ENCODE measurements at regions of chr3 and their contacts with region 1.

Region 1: GRCh38 chr3:66378256-66378823 is 122.5 kb downstream of the LRIG1 start:
- DNase-seq: no peak
- ATAC-seq: no peak
- H3K4me3 Mint-ChIP-seq: no peak overlapping the region
- H3K27ac Mint-ChIP-seq: peak overlapping the region; percentile 45
- H3K4me1 Mint-ChIP-seq: peaks cover 9% of the 10 kb centered on the region
- H3K27me3 Mint-ChIP-seq: no peaks in the 10 kb centered on the region

Region 2: GRCh38 chr3:66276705-66277274 is 101.5 kb before region 1 on chr3:
- CTCF ChIA-PET with region 1: interaction called, 25 read pairs
- POLR2A ChIA-PET with region 1: interaction called, 3 read pairs
- DNase-seq: peak; percentile 74
- ATAC-seq: no peak
- H3K4me3 Mint-ChIP-seq: no peak overlapping the region
- H3K27ac Mint-ChIP-seq: no peak overlapping the region
- H3K4me1 Mint-ChIP-seq: peaks cover 16% of the 10 kb centered on the region
- H3K27me3 Mint-ChIP-seq: no peaks in the 10 kb centered on the region

Region 3: GRCh38 chr3:66302288-66302687 is 76.1 kb before region 1 on chr3:
- CTCF ChIA-PET with region 1: interaction called, 11 read pairs
- POLR2A ChIA-PET with region 1: no interaction called
- DNase-seq: peak; percentile 54
- ATAC-seq: peak; percentile 71
- H3K4me3 Mint-ChIP-seq: peak overlapping the region; percentile 6
- H3K27ac Mint-ChIP-seq: peak overlapping the region; percentile 86
- H3K4me1 Mint-ChIP-seq: peaks cover 59% of the 10 kb centered on the region
- H3K27me3 Mint-ChIP-seq: no peaks in the 10 kb centered on the region

Region 4: DNA sequence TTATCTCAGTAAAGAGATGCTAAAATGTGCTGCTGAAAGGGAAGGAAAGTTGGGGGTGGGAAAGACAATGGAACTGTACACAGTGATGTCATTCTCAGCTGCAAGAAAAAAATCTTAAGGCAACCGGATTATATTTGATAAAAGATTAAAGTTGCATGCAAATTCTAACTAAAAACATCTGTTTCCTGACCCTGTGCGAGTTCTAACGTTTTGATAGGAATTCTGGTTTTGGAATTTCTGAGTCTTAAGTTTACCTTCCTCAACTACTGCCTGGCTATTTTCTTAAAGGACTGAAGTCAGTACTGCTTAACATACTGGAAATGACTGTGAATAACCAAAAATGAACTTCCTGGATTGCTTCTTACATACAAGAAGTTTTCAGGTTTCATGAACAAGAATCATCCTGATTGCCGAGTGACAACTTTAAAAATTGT is 42.0 kb before region 1 on chr3:
- CTCF ChIA-PET with region 1: no interaction called
- POLR2A ChIA-PET with region 1: no interaction called
- DNase-seq: no peak
- ATAC-seq: no peak
- H3K4me3 Mint-ChIP-seq: no peak overlapping the region
- H3K27ac Mint-ChIP-seq: no peak overlapping the region
- H3K4me1 Mint-ChIP-seq: no peaks in the 10 kb centered on the region
- H3K27me3 Mint-ChIP-seq: no peaks in the 10 kb centered on the region

Region 5: GRCh38 chr3:66353530-66353929 is 24.8 kb before region 1 on chr3:
- CTCF ChIA-PET with region 1: interaction called, 22 read pairs
- POLR2A ChIA-PET with region 1: no interaction called
- DNase-seq: no peak
- ATAC-seq: no peak
- H3K4me3 Mint-ChIP-seq: no peak overlapping the region
- H3K27ac Mint-ChIP-seq: no peak overlapping the region
- H3K4me1 Mint-ChIP-seq: peaks cover 15% of the 10 kb centered on the region
- H3K27me3 Mint-ChIP-seq: no peaks in the 10 kb centered on the region

Region 6: DNA sequence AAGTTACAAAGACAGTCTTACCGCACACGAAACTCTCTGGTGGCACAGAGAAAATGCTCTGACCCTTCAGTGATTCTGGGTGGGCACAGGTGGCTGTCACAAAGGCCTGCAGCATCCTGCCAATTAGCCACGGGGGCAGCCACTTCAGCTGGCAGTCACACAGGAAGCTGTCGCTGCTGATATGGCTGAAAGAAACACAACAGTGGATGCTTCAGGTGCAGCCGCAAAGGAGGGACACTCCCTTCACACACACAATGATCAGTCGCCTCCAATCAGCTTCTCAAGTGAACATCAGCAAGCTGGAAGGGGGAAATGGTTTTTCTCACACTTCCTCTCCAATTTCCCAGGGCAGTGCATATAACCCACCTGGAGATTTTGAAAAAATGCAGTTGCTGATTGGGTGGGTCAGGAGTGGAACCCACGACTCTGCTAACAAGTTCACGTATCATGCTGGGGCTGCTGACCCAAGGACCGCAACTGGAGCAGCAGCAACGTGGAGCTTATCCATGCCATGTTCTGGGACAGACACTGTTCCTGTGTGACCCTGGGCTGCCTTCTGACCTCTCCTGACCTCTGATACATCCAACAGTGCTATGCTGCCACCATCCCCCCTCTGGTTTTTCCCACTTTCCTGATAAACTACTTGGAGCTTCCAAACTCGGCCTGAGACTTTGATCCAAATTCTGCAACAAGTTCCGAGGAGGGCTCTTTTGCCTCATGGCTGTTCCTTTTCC is 15.8 kb after region 1 on chr3:
- CTCF ChIA-PET with region 1: interaction called, 22 read pairs
- POLR2A ChIA-PET with region 1: no interaction called
- DNase-seq: peak; percentile 77
- ATAC-seq: peak; percentile 93
- H3K4me3 Mint-ChIP-seq: peak overlapping the region; percentile 67
- H3K27ac Mint-ChIP-seq: peak overlapping the region; percentile 90
- H3K4me1 Mint-ChIP-seq: peaks cover 30% of the 10 kb centered on the region
- H3K27me3 Mint-ChIP-seq: no peaks in the 10 kb centered on the region

Region 7: DNA sequence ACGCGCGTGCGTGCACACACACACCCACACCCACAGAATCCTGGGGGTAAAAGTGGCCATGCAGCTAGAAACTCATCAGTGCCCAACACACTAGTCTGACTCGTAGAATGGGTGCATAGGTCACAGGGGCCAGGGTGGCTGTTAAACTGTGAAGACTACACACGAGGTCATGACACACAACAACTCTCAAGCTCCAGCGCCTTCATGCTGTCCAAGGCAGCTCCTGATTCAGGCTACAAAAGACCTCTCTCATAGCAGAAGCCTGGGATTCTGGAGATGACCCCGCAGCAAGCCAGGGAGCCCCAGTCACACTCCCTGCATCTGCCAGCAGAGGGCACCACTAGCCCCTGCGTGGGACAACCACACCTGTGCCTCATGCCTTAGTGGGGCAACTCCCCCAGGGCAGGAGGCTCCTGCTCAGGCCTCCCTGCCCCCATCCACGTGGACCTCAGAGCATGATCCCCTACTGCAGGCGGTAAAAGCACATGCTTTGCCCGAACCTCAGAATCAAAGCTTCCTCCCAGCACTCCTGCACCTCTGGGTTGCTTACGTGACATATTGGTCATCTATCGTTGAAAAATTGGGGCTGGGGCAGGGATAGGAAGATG is 29.4 kb after region 1 on chr3:
- CTCF ChIA-PET with region 1: interaction called, 10 read pairs
- POLR2A ChIA-PET with region 1: no interaction called
- DNase-seq: peak; percentile 78
- ATAC-seq: peak; percentile 90
- H3K4me3 Mint-ChIP-seq: no peak overlapping the region
- H3K27ac Mint-ChIP-seq: no peak overlapping the region
- H3K4me1 Mint-ChIP-seq: peaks cover 11% of the 10 kb centered on the region
- H3K27me3 Mint-ChIP-seq: no peaks in the 10 kb centered on the region

Region 8: GRCh38 chr3:66931291-66931690 is 553.0 kb after region 1 on chr3:
- CTCF ChIA-PET with region 1: no interaction called
- POLR2A ChIA-PET with region 1: no interaction called
- DNase-seq: no peak
- ATAC-seq: no peak
- H3K4me3 Mint-ChIP-seq: no peak overlapping the region
- H3K27ac Mint-ChIP-seq: no peak overlapping the region
- H3K4me1 Mint-ChIP-seq: no peaks in the 10 kb centered on the region
- H3K27me3 Mint-ChIP-seq: peaks cover 7% of the 10 kb centered on the region

Measured in activated CD8-positive, alpha-beta T cell treated with anti-CD3 and anti-CD28 coated beads, Interleukin-2, amount 10 ng/mL, durations not matched to agents 7 days and 5 days (primary cell).